GM23248 (cell line): ENCODE measurements at regions of chr3 and their contacts with region 1.

Region 1: DNA sequence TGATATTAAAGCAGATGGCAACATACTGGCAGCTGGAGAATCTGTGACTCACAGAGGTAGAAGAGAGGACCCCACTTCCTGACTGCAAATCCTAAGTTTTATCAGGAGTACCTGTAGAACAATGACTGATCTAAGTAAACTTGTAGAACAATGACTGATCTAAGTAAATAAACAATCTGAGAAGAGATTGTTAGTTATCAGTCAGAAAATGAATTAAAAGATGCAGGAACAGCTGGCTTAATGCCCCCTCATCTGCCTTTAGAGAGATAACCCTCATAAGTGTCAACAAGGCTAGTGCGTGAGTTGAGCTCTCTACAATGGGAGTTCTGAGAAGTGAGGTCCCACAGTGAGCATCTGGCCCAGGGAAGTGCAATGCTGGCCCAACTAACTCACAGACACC is 14.6 kb downstream of the ACAD11 start:
- DNase-seq: no peak
- H3K4me3 ChIP-seq: no peak overlapping the region
- H3K27ac ChIP-seq: no peak overlapping the region
- H3K4me1 ChIP-seq: 0 out of 2 replicates have a peak, but pooled peaks cover 5% of the 10 kb centered on the region
- H3K27me3 ChIP-seq: no peaks in the 10 kb centered on the region

Region 2: DNA sequence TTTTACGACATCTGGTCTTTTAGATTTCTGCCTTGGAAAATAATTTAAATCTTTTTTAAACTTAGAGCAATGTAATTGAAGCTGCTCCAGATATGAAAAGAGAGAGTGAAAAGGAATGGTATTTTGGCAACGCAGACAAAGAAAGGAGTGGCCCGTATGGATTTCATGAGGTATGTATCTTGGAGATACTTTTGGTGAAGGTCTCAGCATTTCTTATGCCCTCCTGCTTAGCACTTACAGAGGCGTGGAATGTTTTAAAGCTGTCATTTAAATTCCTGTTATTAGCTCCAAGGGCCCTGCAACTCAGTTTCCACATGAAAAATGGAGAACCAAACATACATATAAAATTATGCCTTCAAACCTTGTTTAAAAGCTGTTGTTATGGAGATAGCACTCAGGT is 162.9 kb before region 1 on chr3:
- in situ Hi-C with region 1: no loop called
- DNase-seq: no peak
- H3K4me3 ChIP-seq: no peak overlapping the region
- H3K27ac ChIP-seq: no peak overlapping the region
- H3K4me1 ChIP-seq: peaks cover 14% of the 10 kb centered on the region
- H3K27me3 ChIP-seq: no peaks in the 10 kb centered on the region

Region 3: GRCh38 chr3:132543036-132543739 is 101.9 kb before region 1 on chr3:
- in situ Hi-C with region 1: loop called (anchors 5 kb)
- DNase-seq: peak; percentile 94
- H3K4me3 ChIP-seq: peak overlapping the region; percentile 45
- H3K27ac ChIP-seq: peak overlapping the region; percentile 93
- H3K4me1 ChIP-seq: peaks cover 27% of the 10 kb centered on the region
- H3K27me3 ChIP-seq: no peaks in the 10 kb centered on the region